ENCODE measurements at regions of chr18 and their contacts with region 1.

Region 1: DNA sequence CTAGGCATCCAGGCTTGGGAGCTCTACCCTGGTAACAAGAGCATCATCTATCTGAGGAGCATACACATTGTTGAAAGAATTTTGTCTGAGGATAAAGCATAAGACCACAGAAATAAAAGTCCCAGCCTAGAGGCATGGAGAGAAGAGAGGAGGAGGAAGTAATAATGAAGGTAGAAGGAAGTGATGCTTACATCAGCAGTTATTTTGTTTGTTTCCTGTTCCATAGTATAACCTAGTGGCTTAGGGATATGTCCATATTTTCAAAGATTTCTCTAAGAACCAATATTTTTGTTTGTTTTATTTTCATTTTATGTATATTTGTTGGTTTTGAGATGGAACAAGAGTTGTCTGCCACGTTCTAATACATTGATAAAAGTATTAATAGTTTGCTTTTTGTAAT is 407.4 kb upstream of the SETBP1 start:
- DNase-seq: no peak
- H3K4me3 ChIP-seq: no peak overlapping the region
- H3K27ac ChIP-seq: no peak overlapping the region
- H3K4me1 ChIP-seq: no peaks in the 10 kb centered on the region
- H3K27me3 ChIP-seq: no peaks in the 10 kb centered on the region
- CTCF ChIP-seq: no peak
- EP300 ChIP-seq: no peak
- POLR2A ChIP-seq: no peak

Region 2: GRCh38 chr18:44195394-44196140 is 77.7 kb before region 1 on chr18:
- in situ Hi-C with region 1: no loop called
- intact Hi-C with region 1: no loop called
- DNase-seq: no peak
- H3K4me3 ChIP-seq: no peak overlapping the region
- H3K27ac ChIP-seq: no peak overlapping the region
- H3K4me1 ChIP-seq: peaks cover 0 to 17% (median 4%) of the 10 kb centered on the region in 4 donors
- H3K27me3 ChIP-seq: no peaks in the 10 kb centered on the region
- CTCF ChIP-seq: no peak
- EP300 ChIP-seq: no peak
- POLR2A ChIP-seq: no peak

Region 3: GRCh38 chr18:44823782-44824181 is 550.5 kb after region 1 on chr18:
- in situ Hi-C with region 1: no loop called
- intact Hi-C with region 1: loop called (anchors 5 kb)
- DNase-seq: no peak
- H3K4me3 ChIP-seq: no peak overlapping the region
- H3K27ac ChIP-seq: peak overlapping the region in 3 of 4 donors; percentile 52 to 63 (median 62)
- H3K4me1 ChIP-seq: peaks cover 28 to 58% (median 34%) of the 10 kb centered on the region in 4 donors
- H3K27me3 ChIP-seq: no peaks in the 10 kb centered on the region
- CTCF ChIP-seq: no peak
- EP300 ChIP-seq: no peak
- POLR2A ChIP-seq: no peak

Region 4: GRCh38 chr18:45034179-45034578 is 760.9 kb after region 1 on chr18:
- in situ Hi-C with region 1: no loop called
- intact Hi-C with region 1: no loop called
- DNase-seq: no peak
- H3K4me3 ChIP-seq: no peak overlapping the region
- H3K27ac ChIP-seq: no peak overlapping the region
- H3K4me1 ChIP-seq: no peaks in the 10 kb centered on the region
- H3K27me3 ChIP-seq: no peaks in the 10 kb centered on the region
- CTCF ChIP-seq: no peak
- EP300 ChIP-seq: no peak
- POLR2A ChIP-seq: no peak

Measured in transverse colon (tissue), 4 donors.